ENCODE measurements at regions of chr1 and their contacts with region 1.

Region 1: GRCh38 chr1:243325305-243325890 is 69.6 kb downstream of the SDCCAG8 start:
- DNase-seq: peak in 3 of 9 experiments; percentile 34 to 64 (median 55)
- ATAC-seq: peak; percentile 51
- H3K4me3 ChIP-seq: no peak overlapping the region
- H3K4me3 Mint-ChIP-seq: no peak overlapping the region
- H3K27ac ChIP-seq: no peak overlapping the region
- H3K27ac Mint-ChIP-seq: no peak overlapping the region
- H3K4me1 ChIP-seq: no peaks in the 10 kb centered on the region
- H3K4me1 Mint-ChIP-seq: no peaks in the 10 kb centered on the region
- H3K27me3 ChIP-seq: no peaks in the 10 kb centered on the region
- H3K27me3 Mint-ChIP-seq: no peaks in the 10 kb centered on the region
- CTCF ChIP-seq: peak; percentile 91

Region 2: DNA sequence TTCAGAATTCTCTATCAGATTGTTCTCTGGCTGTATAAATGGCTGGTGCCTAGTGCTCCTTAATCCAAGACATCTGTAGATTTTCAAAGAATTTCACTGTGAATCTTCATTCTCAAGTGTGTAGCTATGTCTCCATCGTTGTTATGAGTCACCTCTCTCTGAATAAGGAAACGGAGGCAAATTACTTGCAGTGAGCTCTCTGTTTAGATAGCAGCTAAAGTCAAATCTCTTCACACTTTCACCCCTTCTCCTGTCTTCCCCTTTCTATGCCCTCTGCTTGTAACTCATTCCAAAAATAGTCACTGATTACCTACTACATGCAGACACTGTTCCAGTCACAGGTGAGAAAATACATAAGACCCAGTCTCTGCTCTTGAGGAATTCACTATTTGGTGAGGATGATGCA is 1724.9 kb before region 1 on chr1:
- CTCF ChIA-PET with region 1: no interaction called
- POLR2A ChIA-PET with region 1: no interaction called
- intact Hi-C with region 1: loop called in 1 of 2 experiments (anchors 10 kb)
- DNase-seq: no peak
- ATAC-seq: no peak
- H3K4me3 ChIP-seq: no peak overlapping the region
- H3K4me3 Mint-ChIP-seq: no peak overlapping the region
- H3K27ac ChIP-seq: no peak overlapping the region
- H3K27ac Mint-ChIP-seq: no peak overlapping the region
- H3K4me1 ChIP-seq: no peaks in the 10 kb centered on the region
- H3K4me1 Mint-ChIP-seq: no peaks in the 10 kb centered on the region
- H3K27me3 ChIP-seq: no peaks in the 10 kb centered on the region
- H3K27me3 Mint-ChIP-seq: no peaks in the 10 kb centered on the region
- CTCF ChIP-seq: no peak

Region 3: GRCh38 chr1:241895013-241895412 is 1430.4 kb before region 1 on chr1:
- CTCF ChIA-PET with region 1: no interaction called
- POLR2A ChIA-PET with region 1: no interaction called
- intact Hi-C with region 1: loop called (anchors 1 to 10 kb)
- DNase-seq: no peak
- ATAC-seq: no peak
- H3K4me3 ChIP-seq: no peak overlapping the region
- H3K4me3 Mint-ChIP-seq: no peak overlapping the region
- H3K27ac ChIP-seq: no peak overlapping the region
- H3K27ac Mint-ChIP-seq: no peak overlapping the region
- H3K4me1 ChIP-seq: no peaks in the 10 kb centered on the region
- H3K4me1 Mint-ChIP-seq: no peaks in the 10 kb centered on the region
- H3K27me3 ChIP-seq: no peaks in the 10 kb centered on the region
- H3K27me3 Mint-ChIP-seq: no peaks in the 10 kb centered on the region
- CTCF ChIP-seq: no peak

Region 4: DNA sequence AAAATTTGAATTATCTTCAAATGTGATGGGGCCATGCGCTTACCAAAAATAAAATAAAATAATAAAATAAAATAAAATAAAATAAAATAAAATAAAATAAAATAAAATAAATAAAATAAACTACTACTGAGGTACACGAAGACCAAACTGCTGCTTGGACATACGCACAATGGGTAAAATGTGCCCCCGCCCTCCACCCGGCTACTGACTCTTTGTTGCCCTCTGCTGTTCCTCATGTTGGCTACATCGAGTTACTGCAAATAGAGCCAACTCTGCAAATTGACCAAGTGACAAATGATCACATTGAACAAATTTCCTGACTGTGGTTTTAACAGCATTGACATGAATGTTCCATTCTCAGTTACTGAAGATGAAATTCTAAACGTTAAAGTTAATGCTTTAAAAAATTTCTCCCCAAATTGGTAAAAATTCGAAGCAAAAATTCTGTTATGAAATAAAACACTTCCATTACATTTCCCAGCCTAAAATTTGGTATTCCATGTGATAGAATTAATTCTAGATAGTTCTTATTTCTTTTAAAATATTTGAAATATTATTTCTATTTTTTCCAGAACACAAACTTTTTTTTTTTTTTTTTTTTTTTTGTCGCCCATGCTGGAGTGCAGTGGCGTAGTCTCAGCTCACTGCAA is 1307.7 kb before region 1 on chr1:
- CTCF ChIA-PET with region 1: no interaction called
- POLR2A ChIA-PET with region 1: no interaction called
- intact Hi-C with region 1: loop called (anchors 1 to 5 kb)
- DNase-seq: peak in 5 of 9 experiments; percentile 2 to 52 (median 32)
- ATAC-seq: no peak
- H3K4me3 ChIP-seq: no peak overlapping the region
- H3K4me3 Mint-ChIP-seq: no peak overlapping the region
- H3K27ac ChIP-seq: no peak overlapping the region
- H3K27ac Mint-ChIP-seq: no peak overlapping the region
- H3K4me1 ChIP-seq: no peaks in the 10 kb centered on the region
- H3K4me1 Mint-ChIP-seq: no peaks in the 10 kb centered on the region
- H3K27me3 ChIP-seq: peaks cover 0 to 2% of the 10 kb centered on the region in 2 experiments
- H3K27me3 Mint-ChIP-seq: no peaks in the 10 kb centered on the region
- CTCF ChIP-seq: peak; percentile 37

Region 5: GRCh38 chr1:242454262-242455045 is 870.9 kb before region 1 on chr1:
- CTCF ChIA-PET with region 1: interaction called, 3 read pairs
- POLR2A ChIA-PET with region 1: no interaction called
- intact Hi-C with region 1: loop called in 1 of 2 experiments (anchors 1 kb)
- DNase-seq: peak in 2 of 9 experiments; percentile 6 to 11
- ATAC-seq: no peak
- H3K4me3 ChIP-seq: no peak overlapping the region
- H3K4me3 Mint-ChIP-seq: no peak overlapping the region
- H3K27ac ChIP-seq: no peak overlapping the region
- H3K27ac Mint-ChIP-seq: no peak overlapping the region
- H3K4me1 ChIP-seq: no peaks in the 10 kb centered on the region
- H3K4me1 Mint-ChIP-seq: no peaks in the 10 kb centered on the region
- H3K27me3 ChIP-seq: no peaks in the 10 kb centered on the region
- H3K27me3 Mint-ChIP-seq: peaks cover 17% of the 10 kb centered on the region
- CTCF ChIP-seq: no peak

Region 6: DNA sequence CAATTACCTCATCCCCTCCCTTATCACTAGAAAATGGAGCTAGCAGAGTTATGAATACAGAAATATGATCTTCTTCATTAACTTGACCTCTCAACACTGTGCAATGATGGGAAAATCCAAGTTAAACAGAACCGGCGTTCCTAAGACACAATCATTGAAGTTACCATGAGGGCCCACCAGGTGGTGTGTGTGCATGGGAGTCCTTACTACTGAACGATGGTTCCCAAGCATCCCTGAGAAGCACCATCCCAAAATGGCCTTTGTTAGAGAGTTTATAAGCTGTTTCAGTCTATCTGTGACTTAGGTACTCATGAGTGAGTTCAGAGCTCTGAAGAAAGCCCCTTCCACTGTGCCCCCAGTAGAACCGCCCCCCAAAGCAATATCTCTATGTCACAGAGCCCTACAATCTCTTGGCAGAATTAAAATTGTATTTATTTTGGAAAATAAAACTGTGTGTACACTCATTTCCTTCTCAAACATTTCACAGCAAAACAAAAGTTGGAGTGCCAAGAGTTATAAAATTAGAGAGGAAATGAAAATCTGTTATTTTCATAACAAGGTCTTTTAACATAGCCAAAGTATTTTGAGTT is 857.7 kb before region 1 on chr1:
- CTCF ChIA-PET with region 1: interaction called, 3 read pairs
- POLR2A ChIA-PET with region 1: no interaction called
- intact Hi-C with region 1: loop called in 1 of 2 experiments (anchors 1 kb)
- DNase-seq: peak in 3 of 9 experiments; percentile 14 to 25 (median 24)
- ATAC-seq: no peak
- H3K4me3 ChIP-seq: no peak overlapping the region
- H3K4me3 Mint-ChIP-seq: no peak overlapping the region
- H3K27ac ChIP-seq: no peak overlapping the region
- H3K27ac Mint-ChIP-seq: no peak overlapping the region
- H3K4me1 ChIP-seq: no peaks in the 10 kb centered on the region
- H3K4me1 Mint-ChIP-seq: no peaks in the 10 kb centered on the region
- H3K27me3 ChIP-seq: no peaks in the 10 kb centered on the region
- H3K27me3 Mint-ChIP-seq: peaks cover 7% of the 10 kb centered on the region
- CTCF ChIP-seq: no peak

Measured in CD8-positive, alpha-beta T cell (primary cell).